ENCODE measurements at regions of chr3 and their contacts with region 1.

Region 1: DNA sequence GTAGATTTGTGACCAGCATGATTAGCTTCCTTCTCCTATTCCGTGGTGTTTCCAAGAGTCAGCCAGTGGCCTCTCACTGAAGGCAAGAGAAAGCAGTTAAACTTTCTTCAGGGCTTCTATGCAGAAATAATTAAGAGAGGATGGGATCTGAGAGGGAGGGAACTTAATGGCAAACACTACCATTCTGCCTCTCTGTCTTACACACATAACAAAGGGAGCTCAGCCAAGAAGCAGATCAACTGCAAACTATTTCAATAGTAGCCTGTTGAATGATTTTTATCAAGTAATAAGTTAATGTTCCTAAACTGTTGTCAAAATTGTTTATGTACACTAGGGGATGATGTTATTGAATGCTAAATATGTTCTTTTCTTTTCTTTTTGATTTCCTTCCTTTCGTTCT is 11.8 kb downstream of the OXSR1 start:
- DNase-seq: peak; percentile 13
- ATAC-seq: peak; percentile 52
- H3K4me3 ChIP-seq: no peak overlapping the region
- H3K27ac ChIP-seq: no peak overlapping the region
- H3K4me1 ChIP-seq: peaks cover 14% of the 10 kb centered on the region
- H3K27me3 ChIP-seq: no peaks in the 10 kb centered on the region
- CTCF ChIP-seq: no peak
- POLR2A ChIP-seq: no peak
- RAD21 ChIP-seq: no peak

Region 2: DNA sequence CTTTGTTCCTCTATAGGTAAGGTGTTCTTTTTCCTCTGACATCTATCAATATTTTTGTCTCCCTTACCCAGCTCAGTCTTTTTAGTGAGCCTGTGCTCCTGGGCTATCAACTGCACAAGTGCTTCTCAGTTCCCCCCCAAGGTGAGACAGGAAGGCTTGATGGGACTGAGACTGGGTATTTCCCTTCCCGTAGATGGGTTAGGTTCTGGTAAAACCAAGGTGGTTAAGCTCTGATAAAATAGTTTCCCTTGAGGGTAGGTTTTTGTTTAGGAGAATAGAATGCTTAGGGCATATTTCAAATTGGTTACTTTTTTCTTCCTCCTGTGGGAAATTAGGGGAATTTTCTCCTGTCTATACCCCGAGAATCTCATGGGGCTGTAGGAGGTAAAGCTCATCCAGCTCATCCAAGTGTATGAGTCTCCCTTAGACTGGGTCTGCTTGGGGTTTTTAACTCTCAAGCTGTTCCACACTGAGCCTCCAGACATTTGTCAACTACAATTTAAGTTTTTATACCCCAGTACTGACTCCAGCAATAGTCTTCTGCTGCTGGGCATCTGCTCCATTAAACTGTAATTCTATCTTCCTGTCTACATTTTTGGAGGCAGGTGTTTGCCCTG is 33.1 kb after region 1 on chr3:
- CTCF ChIA-PET with region 1: no interaction called
- POLR2A ChIA-PET with region 1: no interaction called
- dilution Hi-C with region 1: no loop called
- in situ Hi-C with region 1: no loop called
- intact Hi-C with region 1: loop called (anchors 5 kb)
- DNase-seq: no peak
- ATAC-seq: no peak
- H3K4me3 ChIP-seq: no peak overlapping the region
- H3K27ac ChIP-seq: no peak overlapping the region
- H3K4me1 ChIP-seq: peaks cover 3% of the 10 kb centered on the region
- H3K27me3 ChIP-seq: no peaks in the 10 kb centered on the region
- CTCF ChIP-seq: no peak
- POLR2A ChIP-seq: no peak
- RAD21 ChIP-seq: no peak

Measured in IMR-90 (cell line).